ENCODE measurements at regions of chr10 and their contacts with region 1.

Region 1: DNA sequence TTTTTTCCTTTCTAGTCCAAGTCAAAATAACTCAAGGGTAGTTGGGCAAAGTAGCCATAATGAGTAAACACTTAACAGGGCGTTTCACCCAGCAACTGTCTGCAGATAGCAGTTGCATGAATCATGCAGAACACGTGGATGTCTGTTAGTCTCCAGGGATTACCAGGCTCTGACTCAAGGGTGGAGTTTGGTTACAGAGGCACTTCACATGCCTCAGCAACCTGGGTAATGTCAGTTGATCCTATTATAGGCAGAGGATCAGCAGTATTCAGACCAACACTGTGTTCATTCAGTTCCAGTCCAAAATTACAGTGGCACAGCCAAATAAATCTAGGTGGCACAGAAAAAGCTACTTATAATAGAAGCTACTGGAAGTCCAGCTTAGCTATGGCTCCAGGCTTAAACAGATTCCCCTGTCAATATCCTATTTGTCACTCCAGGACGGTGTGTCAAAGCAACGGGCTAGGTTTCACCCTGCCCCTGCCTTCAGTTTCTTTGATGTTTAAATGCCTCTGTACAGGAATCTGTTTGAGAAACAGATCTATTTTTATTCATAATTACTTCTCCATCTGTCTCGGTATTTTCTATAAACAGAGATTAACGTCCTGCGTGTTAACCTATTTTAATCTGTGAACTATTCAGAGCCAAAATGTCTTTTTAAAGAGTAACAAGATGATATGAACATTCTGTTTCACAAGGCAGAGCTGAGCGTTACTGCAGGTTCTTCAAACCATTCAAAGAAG is 162.7 kb upstream of the AKR1E2 start:
- DNase-seq: peak in 4 of 5 donors; percentile 77 to 85 (median 80)
- ATAC-seq: peak; percentile 84 to 95 (median 92)
- H3K4me3 ChIP-seq: peak overlapping the region in 6 of 12 donors; percentile 3 to 27 (median 10)
- H3K27ac ChIP-seq: peak overlapping the region; percentile 88 to 99 (median 92)
- H3K4me1 ChIP-seq: peaks cover 10 to 44% (median 34%) of the 10 kb centered on the region in 12 donors
- H3K27me3 ChIP-seq: no peaks in the 10 kb centered on the region
- CTCF ChIP-seq: no peak
- POLR2A ChIP-seq: peak in 1 of 2 donors; percentile 7

Region 2: GRCh38 chr10:3197348-3198003 is 1465.9 kb before region 1 on chr10:
- intact Hi-C with region 1: loop called in 5 of 10 experiments (anchors 5 to 10 kb)
- DNase-seq: peak; percentile 78 to 90 (median 83)
- ATAC-seq: peak; percentile 76 to 96 (median 92)
- H3K4me3 ChIP-seq: peak overlapping the region in 9 of 12 donors; percentile 18 to 43 (median 32)
- H3K27ac ChIP-seq: peak overlapping the region in 4 of 12 donors; percentile 26 to 61 (median 28)
- H3K4me1 ChIP-seq: peaks cover 0 to 23% (median 11%) of the 10 kb centered on the region in 12 donors
- H3K27me3 ChIP-seq: no peaks in the 10 kb centered on the region
- CTCF ChIP-seq: peak; percentile 81 to 96 (median 93)
- POLR2A ChIP-seq: no peak

Region 3: DNA sequence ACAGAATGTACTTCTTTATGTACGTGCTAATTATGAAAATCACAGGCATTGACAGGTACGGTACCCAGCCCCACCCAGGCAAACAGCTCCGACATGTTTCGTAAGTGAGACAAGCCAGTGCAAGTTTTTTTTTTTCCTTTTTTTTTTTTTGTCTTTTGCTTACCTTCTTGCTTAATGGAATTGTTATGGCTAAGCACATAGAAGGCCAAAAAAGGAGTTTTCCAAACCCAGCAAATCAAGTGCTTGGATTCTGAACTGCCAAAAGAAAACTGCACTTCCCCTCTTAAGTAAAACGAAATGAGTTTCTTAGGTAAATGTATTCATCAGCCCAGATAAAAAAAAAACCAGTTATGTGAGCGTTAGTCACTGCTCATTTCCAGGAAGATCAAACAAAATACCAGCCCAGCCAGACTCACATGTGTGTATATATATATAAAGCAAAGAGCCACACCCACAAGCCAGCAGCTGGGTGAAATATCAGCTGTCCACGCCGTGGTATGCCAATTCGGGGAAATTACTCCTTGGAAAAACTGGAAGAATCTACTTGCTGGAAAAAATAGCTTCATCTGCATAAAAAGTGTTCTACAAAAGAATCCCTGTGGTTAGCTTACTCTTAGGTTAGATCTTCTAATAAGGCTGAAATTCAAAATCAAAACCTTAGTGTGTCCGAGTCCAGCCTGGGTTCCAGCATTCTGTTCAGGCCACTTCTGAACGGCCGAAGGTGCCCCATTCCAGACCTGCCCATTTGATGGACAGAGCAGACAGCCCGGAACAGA is 886.3 kb before region 1 on chr10:
- intact Hi-C with region 1: loop called in 5 of 10 experiments (anchors 2 to 10 kb)
- DNase-seq: peak in 3 of 5 donors; percentile 49 to 61 (median 51)
- ATAC-seq: peak in 3 of 4 donors; percentile 30 to 36 (median 34)
- H3K4me3 ChIP-seq: peak overlapping the region in 2 of 12 donors; percentile 2 to 100
- H3K27ac ChIP-seq: peak overlapping the region in 11 of 12 donors; percentile 66 to 100 (median 99)
- H3K4me1 ChIP-seq: peaks cover 23 to 78% (median 72%) of the 10 kb centered on the region in 12 donors
- H3K27me3 ChIP-seq: no peaks in the 10 kb centered on the region
- CTCF ChIP-seq: no peak
- POLR2A ChIP-seq: no peak

Region 4: GRCh38 chr10:3902054-3902808 is 761.1 kb before region 1 on chr10:
- intact Hi-C with region 1: loop called in 1 of 10 experiments (anchors 10 kb)
- DNase-seq: peak in 2 of 5 donors; percentile 33 to 42
- ATAC-seq: peak; percentile 41 to 81 (median 70)
- H3K4me3 ChIP-seq: no peak overlapping the region
- H3K27ac ChIP-seq: peak overlapping the region in 6 of 12 donors; percentile 10 to 62 (median 42)
- H3K4me1 ChIP-seq: peaks cover 0 to 19% (median 9%) of the 10 kb centered on the region in 12 donors
- H3K27me3 ChIP-seq: no peaks in the 10 kb centered on the region
- CTCF ChIP-seq: no peak
- POLR2A ChIP-seq: no peak

Region 5: DNA sequence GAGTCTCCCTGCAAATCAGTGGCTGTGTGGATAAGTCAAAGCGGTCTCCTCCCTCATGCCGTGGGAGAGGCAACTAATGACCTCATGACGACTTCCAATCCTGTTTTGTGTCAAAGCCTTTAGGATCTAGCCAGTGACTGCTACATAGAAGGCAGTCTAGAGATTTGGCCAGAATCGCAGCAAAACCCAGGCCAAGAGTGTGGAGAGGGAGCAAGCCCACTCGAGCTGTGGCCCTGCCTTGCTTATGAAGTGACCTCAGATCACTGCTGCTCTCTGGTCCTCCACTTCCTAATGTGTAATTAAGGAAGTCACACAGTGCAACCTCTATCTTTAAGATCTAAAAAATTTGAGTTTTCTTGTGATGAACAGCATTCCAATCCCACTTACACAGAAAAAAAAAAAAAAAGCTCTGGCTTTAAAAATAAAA is 581.6 kb before region 1 on chr10:
- intact Hi-C with region 1: loop called in 4 of 10 experiments (anchors 5 to 10 kb)
- DNase-seq: peak in 3 of 5 donors; percentile 43 to 55 (median 47)
- ATAC-seq: peak in 3 of 4 donors; percentile 28 to 57 (median 57)
- H3K4me3 ChIP-seq: no peak overlapping the region
- H3K27ac ChIP-seq: peak overlapping the region in 10 of 12 donors; percentile 40 to 59 (median 52)
- H3K4me1 ChIP-seq: peaks cover 0 to 55% (median 32%) of the 10 kb centered on the region in 12 donors
- H3K27me3 ChIP-seq: no peaks in the 10 kb centered on the region
- CTCF ChIP-seq: no peak
- POLR2A ChIP-seq: no peak

Region 6: GRCh38 chr10:4512671-4513240 is 150.6 kb before region 1 on chr10:
- intact Hi-C with region 1: loop called in 7 of 10 experiments (anchors 1 to 10 kb)
- DNase-seq: peak; percentile 51 to 79 (median 69)
- ATAC-seq: peak; percentile 79 to 91 (median 88)
- H3K4me3 ChIP-seq: no peak overlapping the region
- H3K27ac ChIP-seq: peak overlapping the region; percentile 10 to 85 (median 70)
- H3K4me1 ChIP-seq: peaks cover 5 to 48% (median 30%) of the 10 kb centered on the region in 12 donors
- H3K27me3 ChIP-seq: no peaks in the 10 kb centered on the region
- CTCF ChIP-seq: peak; percentile 36 to 68 (median 54)
- POLR2A ChIP-seq: no peak

Region 7: GRCh38 chr10:4767033-4767814 is 103.9 kb after region 1 on chr10:
- intact Hi-C with region 1: loop called in 9 of 10 experiments (anchors 2 to 5 kb)
- DNase-seq: peak in 2 of 5 donors; percentile 19 to 28
- ATAC-seq: peak in 3 of 4 donors; percentile 44 to 66 (median 57)
- H3K4me3 ChIP-seq: no peak overlapping the region
- H3K27ac ChIP-seq: peak overlapping the region in 10 of 12 donors; percentile 1 to 53 (median 36)
- H3K4me1 ChIP-seq: peaks cover 0 to 52% (median 33%) of the 10 kb centered on the region in 12 donors
- H3K27me3 ChIP-seq: no peaks in the 10 kb centered on the region
- CTCF ChIP-seq: peak; percentile 58 to 90 (median 81)
- POLR2A ChIP-seq: no peak

Measured in heart left ventricle (tissue), 16 donors.